ENCODE measurements at regions of chr12 and their contacts with region 1.

Region 1: DNA sequence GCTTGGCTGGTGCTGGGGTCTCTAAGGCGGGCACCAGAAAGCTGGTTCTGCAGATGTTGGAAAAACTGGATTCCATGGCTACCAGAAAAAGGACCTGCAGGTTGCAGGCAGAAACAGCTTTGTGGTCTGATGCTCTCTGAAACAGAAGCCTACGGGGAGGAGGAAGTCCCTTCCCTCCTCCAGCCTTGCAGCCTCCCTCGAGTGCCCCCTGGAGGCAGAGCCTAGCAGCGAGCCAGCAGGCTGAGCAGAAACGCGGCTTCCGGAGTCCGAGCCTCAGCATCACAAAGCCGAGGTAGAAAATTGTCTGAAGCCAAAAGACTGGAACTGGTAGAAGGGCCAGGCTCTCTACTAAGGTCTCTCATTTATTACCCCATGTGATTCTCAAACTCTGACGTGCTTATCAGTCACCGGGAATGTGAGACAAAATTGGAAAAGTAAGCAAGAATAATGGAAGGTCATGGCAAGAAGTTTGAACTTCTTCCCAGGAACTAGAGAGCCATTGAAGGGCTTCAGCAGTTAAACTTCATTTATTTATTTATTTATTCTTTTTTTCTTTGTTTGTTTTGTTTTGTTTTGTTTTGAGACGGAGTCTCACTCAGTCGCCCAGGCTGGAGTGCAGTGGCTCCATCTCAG is 82.2 kb upstream of the CPSF6 start:
- DNase-seq: peak; percentile 71 to 93 (median 83)
- ATAC-seq: peak; percentile 97
- H3K4me3 ChIP-seq: peak overlapping the region; percentile 45
- H3K4me3 Mint-ChIP-seq: peak overlapping the region in 8 of 10 donors; percentile 47 to 75 (median 67)
- H3K27ac ChIP-seq: no peak overlapping the region
- H3K27ac Mint-ChIP-seq: peak overlapping the region in 2 of 9 donors; percentile 6 to 65
- H3K4me1 ChIP-seq: peaks cover 0 to 6% of the 10 kb centered on the region in 2 donors
- H3K4me1 Mint-ChIP-seq: peaks cover 8 to 34% (median 31%) of the 10 kb centered on the region in 7 donors
- H3K27me3 ChIP-seq: no peaks in the 10 kb centered on the region
- H3K27me3 Mint-ChIP-seq: no peaks in the 10 kb centered on the region

Region 2: GRCh38 chr12:68932961-68933893 is 223.9 kb before region 1 on chr12 and contains the start of gene CPM:
- CTCF ChIA-PET with region 1: no interaction called
- POLR2A ChIA-PET with region 1: no interaction called
- intact Hi-C with region 1: loop called in 1 of 2 experiments (anchors 5 kb)
- DNase-seq: peak; percentile 47 to 89 (median 62)
- ATAC-seq: peak; percentile 98
- H3K4me3 ChIP-seq: peak within 1 kb of the TSS; percentile 58
- H3K4me3 Mint-ChIP-seq: peak within 1 kb of the TSS; percentile 83 to 95 (median 89)
- H3K27ac ChIP-seq: peak within 1 kb of the TSS; percentile 0
- H3K27ac Mint-ChIP-seq: peak within 1 kb of the TSS in 3 of 9 donors; percentile 51 to 55 (median 53)
- H3K4me1 ChIP-seq: peaks cover 0 to 6% of the 10 kb centered on the region in 2 donors
- H3K4me1 Mint-ChIP-seq: peaks cover 6 to 20% (median 7%) of the 10 kb centered on the region in 7 donors
- H3K27me3 ChIP-seq: peaks cover 0 to 2% of the 10 kb centered on the region in 2 donors
- H3K27me3 Mint-ChIP-seq: peaks cover 5 to 16% (median 11%) of the 10 kb centered on the region in 5 donors
- total RNA-seq, gene CPM: 1.0 to 5.9 (median 2.7) TPM

Region 3: GRCh38 chr12:69097619-69098368 is 59.3 kb before region 1 on chr12:
- CTCF ChIA-PET with region 1: no interaction called
- POLR2A ChIA-PET with region 1: no interaction called
- intact Hi-C with region 1: no loop called
- DNase-seq: no peak
- ATAC-seq: no peak
- H3K4me3 ChIP-seq: no peak overlapping the region
- H3K4me3 Mint-ChIP-seq: no peak overlapping the region
- H3K27ac ChIP-seq: no peak overlapping the region
- H3K27ac Mint-ChIP-seq: no peak overlapping the region
- H3K4me1 ChIP-seq: no peaks in the 10 kb centered on the region
- H3K4me1 Mint-ChIP-seq: peaks cover 0 to 2% (median under 1%) of the 10 kb centered on the region in 7 donors
- H3K27me3 ChIP-seq: peaks cover 0 to 2% of the 10 kb centered on the region in 2 donors
- H3K27me3 Mint-ChIP-seq: peaks cover 7 to 20% (median 11%) of the 10 kb centered on the region in 5 donors

Region 4: GRCh38 chr12:69254046-69254445 is 96.9 kb after region 1 on chr12:
- CTCF ChIA-PET with region 1: interaction called, 71 read pairs
- POLR2A ChIA-PET with region 1: interaction called, 8 read pairs
- intact Hi-C with region 1: loop called (anchors 1 kb)
- DNase-seq: peak in 7 of 9 donors; percentile 55 to 76 (median 67)
- ATAC-seq: peak; percentile 94
- H3K4me3 ChIP-seq: no peak overlapping the region
- H3K4me3 Mint-ChIP-seq: no peak overlapping the region
- H3K27ac ChIP-seq: peak overlapping the region; percentile 33
- H3K27ac Mint-ChIP-seq: peak overlapping the region; percentile 18 to 93 (median 53)
- H3K4me1 ChIP-seq: peaks cover 0 to 4% of the 10 kb centered on the region in 2 donors
- H3K4me1 Mint-ChIP-seq: peaks cover 19 to 56% (median 54%) of the 10 kb centered on the region in 7 donors
- H3K27me3 ChIP-seq: no peaks in the 10 kb centered on the region
- H3K27me3 Mint-ChIP-seq: no peaks in the 10 kb centered on the region

Region 5: DNA sequence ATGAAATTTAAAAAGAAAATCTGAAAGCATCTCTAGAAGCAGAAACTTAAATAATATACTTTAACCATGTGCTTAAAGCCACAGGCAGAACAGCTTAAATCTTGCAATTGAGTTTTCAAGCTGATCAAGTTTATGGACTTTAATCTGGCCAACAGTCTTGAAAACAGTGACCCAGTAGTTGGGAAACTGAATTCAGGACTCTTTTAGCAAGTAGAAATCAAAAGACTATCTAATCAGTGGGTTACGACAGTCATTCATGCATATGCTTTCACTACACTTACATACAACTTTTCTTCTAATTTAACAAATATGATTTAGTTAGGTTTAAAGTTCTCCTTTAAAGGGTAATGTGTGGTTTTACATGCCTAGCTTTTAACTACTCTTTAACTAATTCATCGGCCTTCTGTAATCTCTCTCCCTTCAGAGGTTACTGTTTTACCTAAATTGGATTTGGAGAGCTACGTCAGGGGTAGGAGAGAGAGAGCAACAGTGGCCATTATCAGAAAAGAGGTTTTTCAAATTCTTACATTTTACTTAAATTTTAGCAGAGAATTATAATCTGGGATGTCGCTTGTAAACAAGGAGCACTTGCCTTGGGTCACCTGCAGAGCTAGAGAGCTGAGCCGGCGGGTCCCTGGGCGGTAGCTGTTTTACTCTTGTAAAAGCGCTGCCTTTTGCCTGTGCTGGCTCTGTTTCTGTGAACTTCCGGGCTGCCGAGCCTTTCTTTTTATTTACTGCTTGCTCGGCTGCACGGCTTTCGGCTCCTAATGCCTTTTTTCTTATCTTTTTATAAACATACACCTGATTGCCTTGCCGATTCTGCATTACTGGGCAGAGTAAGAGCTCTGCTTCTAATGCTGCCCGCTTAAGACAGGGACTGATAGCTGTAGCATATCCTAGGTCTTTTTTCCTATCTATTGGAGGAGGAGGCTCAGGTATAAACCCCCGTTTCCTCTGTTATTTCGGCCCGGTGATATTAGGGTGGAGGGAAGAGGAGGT is 173.6 kb after region 1 on chr12:
- CTCF ChIA-PET with region 1: interaction called, 4 read pairs
- POLR2A ChIA-PET with region 1: no interaction called
- intact Hi-C with region 1: loop called in 1 of 2 experiments (anchors 1 kb)
- DNase-seq: peak; percentile 28 to 83 (median 76)
- ATAC-seq: peak; percentile 78
- H3K4me3 ChIP-seq: peak overlapping the region; percentile 83
- H3K4me3 Mint-ChIP-seq: peak overlapping the region; percentile 75 to 97 (median 96)
- H3K27ac ChIP-seq: peak overlapping the region; percentile 92
- H3K27ac Mint-ChIP-seq: peak overlapping the region; percentile 91 to 99 (median 96)
- H3K4me1 ChIP-seq: peaks cover 20 to 51% of the 10 kb centered on the region in 2 donors
- H3K4me1 Mint-ChIP-seq: peaks cover 10 to 76% (median 71%) of the 10 kb centered on the region in 7 donors
- H3K27me3 ChIP-seq: no peaks in the 10 kb centered on the region
- H3K27me3 Mint-ChIP-seq: peaks cover 0 to 20% (median 0%) of the 10 kb centered on the region in 5 donors

Region 6: DNA sequence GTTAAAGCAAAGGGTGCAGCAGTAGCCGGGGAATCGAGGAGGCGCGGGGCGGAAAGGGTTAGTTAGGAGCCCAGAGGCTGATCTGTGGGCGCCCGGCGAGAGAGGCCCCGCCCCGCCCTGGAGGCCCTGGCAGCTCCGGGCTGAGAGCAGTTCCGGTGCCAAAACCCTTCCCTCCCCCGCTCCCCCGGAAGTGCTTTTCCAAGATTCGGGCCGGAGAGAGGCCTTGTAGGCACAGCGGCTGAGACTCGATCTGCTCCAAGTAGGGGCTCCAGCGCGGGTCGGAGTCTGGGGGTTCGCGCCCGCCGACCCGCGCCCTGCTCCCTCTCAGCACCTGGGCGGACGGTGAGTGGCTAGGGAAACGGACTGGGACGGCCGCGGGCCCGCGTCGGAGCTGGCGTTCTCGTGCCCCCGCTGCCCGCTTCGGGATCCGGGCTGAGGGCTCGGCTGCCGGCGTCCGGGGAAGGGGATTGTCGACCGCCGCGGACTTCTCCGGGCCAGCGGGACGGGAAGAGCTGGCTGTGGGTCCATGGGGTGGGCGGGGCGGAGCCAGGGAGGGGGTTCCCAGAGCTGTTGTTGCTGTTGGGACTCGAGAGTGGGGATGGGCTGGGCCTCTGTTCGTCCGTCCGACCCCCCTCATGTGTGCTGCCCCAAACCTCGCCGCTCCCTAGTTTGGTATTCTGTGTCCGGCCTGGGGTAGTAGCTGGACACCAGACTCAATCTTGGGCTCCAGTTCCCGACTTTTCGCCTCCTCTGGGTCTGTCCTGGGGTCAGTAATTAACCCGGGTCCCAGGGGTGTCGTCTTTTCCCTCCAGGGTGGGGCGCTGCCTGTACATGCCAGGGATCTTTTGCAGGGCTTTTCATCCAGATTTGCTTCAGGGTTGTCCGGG is 313.3 kb after region 1 on chr12 and contains the start of gene FRS2:
- CTCF ChIA-PET with region 1: no interaction called
- POLR2A ChIA-PET with region 1: no interaction called
- intact Hi-C with region 1: loop called (anchors 2 to 5 kb)
- DNase-seq: peak; percentile 66 to 87 (median 81)
- ATAC-seq: peak; percentile 99
- H3K4me3 ChIP-seq: peak within 1 kb of the TSS; percentile 80
- H3K4me3 Mint-ChIP-seq: peak within 1 kb of the TSS; percentile 91 to 100 (median 96)
- H3K27ac ChIP-seq: peak within 1 kb of the TSS; percentile 94
- H3K27ac Mint-ChIP-seq: peak within 1 kb of the TSS; percentile 91 to 99 (median 97)
- H3K4me1 ChIP-seq: peaks cover 11 to 12% of the 10 kb centered on the region in 2 donors
- H3K4me1 Mint-ChIP-seq: peaks cover 41 to 60% (median 51%) of the 10 kb centered on the region in 7 donors
- H3K27me3 ChIP-seq: no peaks in the 10 kb centered on the region
- H3K27me3 Mint-ChIP-seq: no peaks in the 10 kb centered on the region
- total RNA-seq, gene FRS2: 17.5 to 30.1 (median 24.0) TPM

Region 7: DNA sequence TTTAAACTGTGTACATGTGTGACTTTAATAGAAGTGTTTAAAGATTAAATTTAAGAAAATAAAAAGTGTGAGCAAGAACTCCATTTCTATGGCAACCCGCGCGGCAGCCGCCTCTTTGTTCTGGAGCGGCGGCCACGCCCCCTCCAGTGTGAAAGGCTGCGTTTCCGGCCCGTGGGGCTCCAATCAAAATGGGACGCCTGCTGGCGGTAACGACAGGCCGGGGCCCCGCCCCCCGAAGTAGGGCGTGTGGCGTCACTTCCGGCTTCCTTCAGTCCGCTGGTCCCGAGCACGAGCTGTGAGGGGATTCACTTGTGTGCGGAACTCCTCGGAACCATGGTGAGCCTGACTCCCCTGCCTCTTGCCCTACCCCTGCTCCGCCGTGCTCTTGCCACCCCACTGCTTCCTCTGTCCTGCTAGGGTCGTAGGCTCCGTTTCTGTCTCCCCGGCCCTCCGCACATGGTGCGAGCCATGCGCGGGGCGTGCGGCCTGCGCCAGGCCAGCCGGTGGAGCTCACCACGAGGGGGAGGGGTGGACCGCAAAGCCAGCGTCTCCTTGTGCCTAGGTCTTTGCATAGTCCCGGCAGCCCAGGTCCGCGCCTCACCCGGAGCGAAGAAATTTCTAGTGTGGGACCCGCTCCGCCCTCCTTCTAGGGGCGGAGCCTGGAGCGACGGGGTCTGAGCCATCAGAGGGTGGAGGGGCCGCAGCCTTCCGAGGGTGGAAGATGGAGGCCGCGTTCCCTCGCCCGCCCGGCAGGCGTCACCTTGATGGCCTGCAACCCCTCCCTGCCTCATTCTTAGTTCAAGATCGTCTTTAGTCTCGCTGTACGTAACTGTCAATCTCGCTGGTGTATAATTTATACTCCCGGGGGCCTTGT is 428.3 kb after region 1 on chr12 and contains the start of gene CCT2:
- CTCF ChIA-PET with region 1: interaction called, 4 read pairs
- POLR2A ChIA-PET with region 1: interaction called, 4 read pairs
- intact Hi-C with region 1: loop called (anchors 1 to 5 kb)
- DNase-seq: peak; percentile 88 to 96 (median 95)
- ATAC-seq: peak; percentile 97
- H3K4me3 ChIP-seq: peak within 1 kb of the TSS; percentile 100
- H3K4me3 Mint-ChIP-seq: peak within 1 kb of the TSS; percentile 84 to 97 (median 95)
- H3K27ac ChIP-seq: peak within 1 kb of the TSS; percentile 96
- H3K27ac Mint-ChIP-seq: peak within 1 kb of the TSS; percentile 91 to 98 (median 97)
- H3K4me1 ChIP-seq: peaks cover 7 to 11% of the 10 kb centered on the region in 2 donors
- H3K4me1 Mint-ChIP-seq: peaks cover 9 to 28% (median 17%) of the 10 kb centered on the region in 7 donors
- H3K27me3 ChIP-seq: no peaks in the 10 kb centered on the region
- H3K27me3 Mint-ChIP-seq: no peaks in the 10 kb centered on the region
- total RNA-seq, gene CCT2: 106 to 200 (median 157) TPM